ENCODE measurements at regions of chr4 and their contacts with region 1.

Region 1: GRCh38 chr4:89307446-89308160 is at the start of gene GPRIN3:
- DNase-seq: peak; percentile 48
- H3K4me3 Mint-ChIP-seq: peak within 1 kb of the TSS; percentile 66
- H3K27ac Mint-ChIP-seq: peak within 1 kb of the TSS; percentile 26
- H3K4me1 Mint-ChIP-seq: peaks cover 22% of the 10 kb centered on the region
- H3K27me3 Mint-ChIP-seq: no peaks in the 10 kb centered on the region
- CTCF ChIP-seq: no peak
- total RNA-seq, gene GPRIN3: 6.8 and 7.6 TPM in 2 replicates

Region 2: GRCh38 chr4:88981993-88982392 is 325.6 kb before region 1 on chr4:
- CTCF ChIA-PET with region 1: no interaction called
- intact Hi-C with region 1: no loop called
- DNase-seq: no peak
- H3K4me3 Mint-ChIP-seq: no peak overlapping the region
- H3K27ac Mint-ChIP-seq: no peak overlapping the region
- H3K4me1 Mint-ChIP-seq: peaks cover 10% of the 10 kb centered on the region
- H3K27me3 Mint-ChIP-seq: no peaks in the 10 kb centered on the region
- CTCF ChIP-seq: no peak

Region 3: DNA sequence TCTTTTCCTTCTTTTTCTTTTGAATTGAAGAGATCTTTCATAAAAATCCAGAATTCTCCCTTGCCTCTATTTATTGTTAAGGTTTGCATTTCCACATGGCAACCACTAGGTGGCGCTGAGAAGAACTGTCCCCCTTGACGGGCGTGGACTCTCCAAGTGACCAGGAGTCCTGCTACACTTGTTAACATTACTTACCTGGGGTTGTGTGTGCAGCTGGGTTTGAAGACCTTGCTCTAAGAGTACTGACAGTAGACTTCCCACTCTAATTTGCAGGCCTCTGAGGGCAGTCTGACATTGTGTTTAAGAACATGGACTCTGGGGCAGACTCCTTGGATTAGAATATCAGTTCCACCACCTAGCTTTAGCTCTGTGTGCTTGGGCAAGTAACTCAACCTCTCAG is 52.8 kb before region 1 on chr4:
- CTCF ChIA-PET with region 1: no interaction called
- intact Hi-C with region 1: loop called (anchors 5 kb)
- DNase-seq: peak; percentile 41
- H3K4me3 Mint-ChIP-seq: no peak overlapping the region
- H3K27ac Mint-ChIP-seq: peak overlapping the region; percentile 8
- H3K4me1 Mint-ChIP-seq: no peaks in the 10 kb centered on the region
- H3K27me3 Mint-ChIP-seq: no peaks in the 10 kb centered on the region
- CTCF ChIP-seq: no peak